ENCODE measurements at regions of chr1 and their contacts with region 1.

Region 1: DNA sequence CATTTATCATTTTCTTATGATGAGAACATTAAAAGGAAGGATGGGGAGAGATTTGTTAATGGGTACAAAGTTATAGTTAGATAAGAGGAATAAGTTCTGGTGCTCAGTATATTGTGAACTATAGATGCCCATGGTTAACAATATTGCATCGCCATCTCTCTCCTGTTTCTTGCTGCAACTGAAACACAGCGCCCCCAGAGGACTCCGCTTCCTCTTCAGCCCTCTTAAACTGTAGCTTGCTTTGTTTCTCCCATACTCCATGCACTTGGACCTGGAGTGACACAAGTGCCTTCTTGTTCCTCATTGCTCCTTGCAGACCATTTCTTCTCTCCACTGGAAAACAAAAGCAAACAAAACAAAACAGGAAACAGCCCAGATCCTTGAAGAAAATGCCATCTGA is 70.1 kb upstream of the NTPCR start:
- DNase-seq: no peak
- H3K4me3 ChIP-seq: no peak overlapping the region
- H3K27ac ChIP-seq: no peak overlapping the region
- H3K27me3 ChIP-seq: peaks cover 2% of the 10 kb centered on the region
- CTCF ChIP-seq: peak; percentile 63

Region 2: GRCh38 chr1:232868793-232869491 is 11.4 kb before region 1 on chr1:
- CTCF ChIA-PET with region 1: interaction called, 14 read pairs
- POLR2A ChIA-PET with region 1: no interaction called
- DNase-seq: peak; percentile 69
- H3K4me3 ChIP-seq: no peak overlapping the region
- H3K27ac ChIP-seq: no peak overlapping the region
- H3K27me3 ChIP-seq: peaks cover 2% of the 10 kb centered on the region
- CTCF ChIP-seq: no peak

Region 3: DNA sequence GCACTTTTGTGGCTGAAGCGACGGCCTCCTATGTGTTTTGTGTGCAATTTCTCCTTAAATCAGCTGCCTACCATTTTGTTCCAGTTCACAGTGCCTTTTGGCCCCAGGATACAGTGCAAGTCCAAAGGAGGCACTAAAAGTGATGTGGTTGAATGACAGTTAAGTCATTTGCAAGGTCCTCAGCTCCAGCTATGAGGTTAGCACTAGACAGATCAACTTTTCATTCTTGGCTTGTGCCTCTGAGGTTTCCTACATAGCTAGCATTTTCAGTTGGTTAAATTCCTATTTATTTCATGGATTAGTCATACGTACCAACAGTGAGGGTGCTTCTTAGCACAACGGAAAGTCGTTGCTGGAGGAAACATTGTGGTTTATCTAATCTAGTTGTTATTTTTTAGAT is 10.7 kb after region 1 on chr1:
- CTCF ChIA-PET with region 1: interaction called, 29 read pairs
- POLR2A ChIA-PET with region 1: interaction called, 4 read pairs
- DNase-seq: peak; percentile 62
- H3K4me3 ChIP-seq: no peak overlapping the region
- H3K27ac ChIP-seq: peak overlapping the region; percentile 34
- H3K27me3 ChIP-seq: peaks cover 2% of the 10 kb centered on the region
- CTCF ChIP-seq: no peak

Measured in AG04450 (cell line).